PC-9 (cell line): ENCODE measurements at regions of chr14 and their contacts with region 1.

Region 1: GRCh38 chr14:80425686-80426085 is 214.4 kb upstream of the DIO2 start:
- DNase-seq: peak; percentile 54 to 99
- H3K4me3 ChIP-seq: no peak overlapping the region
- H3K27ac ChIP-seq: peak overlapping the region; percentile 92
- H3K4me1 ChIP-seq: peaks cover 29% of the 10 kb centered on the region
- H3K27me3 ChIP-seq: no peaks in the 10 kb centered on the region
- CTCF ChIP-seq: no peak

Region 2: DNA sequence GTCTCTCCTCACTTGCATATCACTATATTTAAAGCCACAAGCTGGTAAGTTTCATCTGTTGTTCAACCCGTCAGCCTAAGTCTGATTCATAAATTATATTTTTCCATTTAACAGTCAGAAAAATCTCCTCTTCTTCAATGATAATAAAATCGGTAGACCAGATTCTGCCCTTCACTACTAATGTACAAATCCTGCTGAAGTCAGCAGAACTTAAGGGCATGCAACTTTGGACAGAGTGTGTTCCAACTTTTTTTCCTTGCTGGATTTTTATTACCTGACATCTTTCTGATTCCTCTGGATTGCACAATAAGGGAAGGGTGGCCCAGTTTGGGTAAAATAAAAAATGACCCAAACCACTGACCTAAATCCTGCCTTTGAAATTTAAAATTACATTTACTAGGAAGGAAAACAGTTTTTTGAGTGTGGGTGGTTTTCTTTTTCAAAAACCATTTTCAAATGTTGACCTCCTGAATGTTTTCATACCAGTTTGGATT is 89.0 kb before region 1 on chr14:
- CTCF ChIA-PET with region 1: no interaction called
- POLR2A ChIA-PET with region 1: no interaction called
- intact Hi-C with region 1: no loop called
- DNase-seq: no peak
- H3K4me3 ChIP-seq: no peak overlapping the region
- H3K27ac ChIP-seq: no peak overlapping the region
- H3K4me1 ChIP-seq: no peaks in the 10 kb centered on the region
- H3K27me3 ChIP-seq: no peaks in the 10 kb centered on the region
- CTCF ChIP-seq: no peak

Region 3: GRCh38 chr14:80390808-80391300 is 34.8 kb before region 1 on chr14:
- CTCF ChIA-PET with region 1: no interaction called
- POLR2A ChIA-PET with region 1: no interaction called
- intact Hi-C with region 1: loop called (anchors 1 kb)
- DNase-seq: peak; percentile 59 to 87
- H3K4me3 ChIP-seq: no peak overlapping the region
- H3K27ac ChIP-seq: peak overlapping the region; percentile 49
- H3K4me1 ChIP-seq: peaks cover 40% of the 10 kb centered on the region
- H3K27me3 ChIP-seq: no peaks in the 10 kb centered on the region
- CTCF ChIP-seq: no peak

Region 4: GRCh38 chr14:80446356-80446755 is 20.7 kb after region 1 on chr14:
- CTCF ChIA-PET with region 1: no interaction called
- POLR2A ChIA-PET with region 1: no interaction called
- intact Hi-C with region 1: no loop called
- DNase-seq: no peak
- H3K4me3 ChIP-seq: no peak overlapping the region
- H3K27ac ChIP-seq: no peak overlapping the region
- H3K4me1 ChIP-seq: no peaks in the 10 kb centered on the region
- H3K27me3 ChIP-seq: no peaks in the 10 kb centered on the region
- CTCF ChIP-seq: no peak

Region 5: DNA sequence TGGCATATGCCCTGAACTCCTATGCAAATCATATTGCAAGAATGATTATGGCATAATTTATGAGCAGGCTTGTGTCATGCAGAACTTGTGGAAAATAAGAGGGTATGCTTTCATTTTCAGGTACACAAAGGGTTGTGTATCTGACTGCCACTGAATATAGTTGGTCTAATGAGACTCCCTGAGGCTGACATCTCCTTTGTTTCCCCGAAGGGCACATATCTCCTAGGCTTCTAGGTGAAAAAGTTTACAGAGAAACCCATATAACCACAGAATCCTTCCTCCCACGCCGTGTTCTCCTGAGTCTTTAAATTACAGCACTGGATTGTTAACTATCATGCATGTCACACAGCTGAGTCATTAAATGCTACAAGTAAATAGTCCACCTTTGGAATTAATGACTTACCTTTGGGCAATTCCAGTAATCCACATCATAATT is 142.3 kb after region 1 on chr14:
- CTCF ChIA-PET with region 1: no interaction called
- POLR2A ChIA-PET with region 1: no interaction called
- intact Hi-C with region 1: loop called (anchors 2 kb)
- DNase-seq: peak; percentile 38 to 86
- H3K4me3 ChIP-seq: no peak overlapping the region
- H3K27ac ChIP-seq: peak overlapping the region; percentile 62
- H3K4me1 ChIP-seq: peaks cover 30% of the 10 kb centered on the region
- H3K27me3 ChIP-seq: no peaks in the 10 kb centered on the region
- CTCF ChIP-seq: no peak